ENCODE measurements at regions of chr7 and their contacts with region 1.

Region 1: DNA sequence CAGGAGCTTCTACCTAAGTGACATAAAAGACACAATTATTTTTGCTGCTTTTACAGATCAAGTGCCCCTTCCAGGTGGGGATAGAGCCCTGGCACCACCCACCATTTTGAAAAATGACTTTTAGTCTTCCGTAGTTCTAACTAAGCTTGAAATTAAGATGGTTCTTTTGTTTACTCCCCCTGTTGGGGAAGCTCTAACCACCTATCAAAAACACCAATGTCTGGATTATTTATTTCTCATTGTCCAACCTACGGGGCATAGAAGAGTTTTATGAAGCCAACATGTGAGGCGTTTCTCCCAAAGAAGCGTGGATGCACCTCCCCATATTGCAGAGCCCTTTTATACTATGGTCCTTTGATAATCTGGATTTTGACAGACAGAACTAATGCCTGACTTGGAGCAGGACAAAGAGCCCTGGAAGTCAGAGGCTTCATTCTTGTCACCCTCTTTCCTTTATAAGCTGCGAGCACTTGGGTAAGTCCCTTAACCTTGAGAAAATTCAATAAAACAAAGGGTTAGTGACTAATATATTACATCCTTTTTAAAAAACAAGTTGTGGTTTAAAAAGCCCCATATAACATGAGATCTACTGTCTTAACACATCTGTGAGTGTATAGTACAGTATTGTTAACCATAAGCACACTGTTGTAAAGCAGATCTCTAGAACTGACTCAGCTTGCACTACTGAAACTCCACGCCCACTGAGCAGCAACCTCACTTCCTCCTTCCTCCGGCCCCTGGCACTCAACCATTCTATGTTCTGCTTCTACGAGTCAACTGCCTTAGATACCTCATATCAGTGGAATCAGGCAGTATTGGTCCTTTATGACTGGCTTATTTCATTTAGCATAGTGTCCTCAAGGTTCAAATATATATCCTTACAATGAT is 67.5 kb downstream of the ATXN7L1 start:
- DNase-seq: peak; percentile 60 to 81 (median 62)
- H3K4me3 ChIP-seq: peak overlapping the region in 1 of 2 donors; percentile 30
- H3K4me3 Mint-ChIP-seq: peak overlapping the region; percentile 2 to 88 (median 55)
- H3K27ac ChIP-seq: peak overlapping the region; percentile 60
- H3K27ac Mint-ChIP-seq: peak overlapping the region; percentile 52 to 92 (median 80)
- H3K4me1 ChIP-seq: peaks cover 56% of the 10 kb centered on the region
- H3K4me1 Mint-ChIP-seq: peaks cover 45 to 65% (median 54%) of the 10 kb centered on the region in 4 donors
- H3K27me3 ChIP-seq: no peaks in the 10 kb centered on the region
- H3K27me3 Mint-ChIP-seq: no peaks in the 10 kb centered on the region

Region 2: DNA sequence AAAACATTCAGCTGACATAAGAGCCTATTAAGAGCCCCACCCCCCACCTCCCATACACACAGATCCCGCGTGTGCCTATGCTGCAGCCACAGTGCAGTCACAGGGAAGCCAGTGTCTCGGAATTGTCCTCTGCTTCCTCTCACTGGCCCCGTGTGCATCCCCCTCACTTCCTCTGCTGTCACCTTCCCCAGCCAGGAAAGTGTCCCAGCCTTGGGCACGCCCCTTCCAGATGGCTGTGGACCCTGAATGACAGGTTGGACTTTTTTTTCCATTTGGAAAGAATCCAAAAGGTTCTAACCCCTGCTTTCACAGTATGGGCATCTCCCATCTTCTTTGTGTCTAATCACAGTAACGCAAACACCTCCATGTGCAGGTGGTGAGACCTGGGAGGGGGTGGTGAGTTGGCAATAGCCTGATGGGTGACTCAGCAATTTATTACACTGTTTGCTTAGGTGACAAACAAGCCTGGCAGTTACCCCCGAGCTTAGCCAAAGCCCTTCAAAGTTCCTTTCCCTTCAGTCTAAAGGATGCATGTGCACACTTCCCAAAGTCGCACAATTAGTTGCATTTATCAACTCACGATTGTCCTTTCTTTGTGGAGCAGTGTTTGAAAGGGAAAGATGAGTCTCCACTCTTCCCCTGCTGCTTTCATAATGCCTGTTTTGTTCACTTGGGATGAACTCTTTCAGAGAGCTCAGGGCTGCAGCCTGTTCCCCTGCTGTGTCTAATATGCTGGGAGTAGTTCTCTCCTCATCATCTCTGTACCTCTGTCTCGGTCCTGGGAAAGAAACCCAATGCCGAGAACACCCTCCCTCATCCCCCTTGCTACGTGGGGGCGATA is 160.2 kb before region 1 on chr7:
- CTCF ChIA-PET with region 1: no interaction called
- POLR2A ChIA-PET with region 1: no interaction called
- intact Hi-C with region 1: no loop called
- DNase-seq: no peak
- H3K4me3 ChIP-seq: no peak overlapping the region
- H3K4me3 Mint-ChIP-seq: no peak overlapping the region
- H3K27ac ChIP-seq: no peak overlapping the region
- H3K27ac Mint-ChIP-seq: peak overlapping the region in 5 of 7 donors; percentile 6 to 70 (median 48)
- H3K4me1 ChIP-seq: no peaks in the 10 kb centered on the region
- H3K4me1 Mint-ChIP-seq: peaks cover 6 to 22% (median 11%) of the 10 kb centered on the region in 4 donors
- H3K27me3 ChIP-seq: no peaks in the 10 kb centered on the region
- H3K27me3 Mint-ChIP-seq: no peaks in the 10 kb centered on the region

Region 3: DNA sequence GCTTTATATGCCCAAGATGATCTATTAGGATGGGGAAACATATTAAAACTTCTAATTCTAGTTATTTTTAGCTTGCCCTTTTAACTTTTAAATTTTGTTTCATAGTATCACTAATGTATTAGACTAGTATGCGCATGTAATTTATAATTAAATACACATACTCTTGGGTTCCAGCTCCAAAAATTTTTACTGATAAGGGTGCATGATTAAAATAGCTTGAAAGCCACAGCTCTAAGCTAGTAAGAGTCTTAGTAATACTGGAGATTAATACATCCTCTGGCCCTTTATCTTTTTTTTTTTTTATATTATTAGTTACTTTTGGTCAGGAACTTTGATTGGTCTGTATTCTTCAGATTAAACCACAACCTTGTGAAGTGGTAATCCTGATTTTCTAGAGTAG is 13.9 kb after region 1 on chr7:
- CTCF ChIA-PET with region 1: interaction called, 6 read pairs
- POLR2A ChIA-PET with region 1: interaction called, 3 read pairs
- intact Hi-C with region 1: loop called (anchors 2 kb)
- DNase-seq: peak in 3 of 5 donors; percentile 8 to 22 (median 21)
- H3K4me3 ChIP-seq: no peak overlapping the region
- H3K4me3 Mint-ChIP-seq: peak overlapping the region in 3 of 8 donors; percentile 8 to 35 (median 17)
- H3K27ac ChIP-seq: no peak overlapping the region
- H3K27ac Mint-ChIP-seq: peak overlapping the region in 3 of 7 donors; percentile 14 to 73 (median 50)
- H3K4me1 ChIP-seq: peaks cover 19% of the 10 kb centered on the region
- H3K4me1 Mint-ChIP-seq: peaks cover 14 to 37% (median 25%) of the 10 kb centered on the region in 4 donors
- H3K27me3 ChIP-seq: no peaks in the 10 kb centered on the region
- H3K27me3 Mint-ChIP-seq: no peaks in the 10 kb centered on the region

Region 4: DNA sequence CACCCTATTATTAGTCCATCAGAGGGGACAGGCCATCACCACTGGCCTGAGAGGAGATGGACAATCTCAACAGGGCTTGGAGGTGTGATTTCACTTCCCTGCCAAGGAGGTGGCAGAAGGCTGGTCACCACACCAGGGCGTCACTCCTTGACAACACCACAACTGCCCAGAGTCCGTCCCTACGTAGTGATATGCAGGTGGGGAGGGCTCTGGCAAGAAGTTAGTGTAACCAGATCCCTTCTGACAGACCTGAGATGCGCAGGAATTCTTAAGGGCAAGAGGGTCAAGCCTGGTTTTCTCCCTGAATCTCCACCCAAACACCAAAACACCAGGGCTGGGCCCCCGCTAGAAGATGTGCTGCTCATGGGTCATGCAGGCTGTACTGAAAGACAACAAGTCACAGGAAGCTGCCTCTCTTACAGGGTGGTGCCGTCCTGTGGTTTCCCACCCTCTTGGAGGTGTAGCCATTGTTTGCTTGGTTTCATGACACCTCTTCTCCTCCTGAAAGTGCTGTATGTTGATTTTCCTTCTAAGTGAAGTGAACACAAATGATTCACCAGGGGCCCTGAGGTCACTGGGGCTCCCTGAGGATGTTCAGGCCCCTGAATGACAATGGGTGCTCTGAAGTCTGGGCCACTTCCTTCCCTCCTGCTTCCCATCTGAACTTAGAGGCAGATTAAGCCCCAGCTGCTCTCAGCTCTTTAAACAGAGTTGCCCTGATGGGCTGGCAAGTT is 40.3 kb after region 1 on chr7:
- CTCF ChIA-PET with region 1: interaction called, 5 read pairs
- POLR2A ChIA-PET with region 1: interaction called, 53 read pairs
- intact Hi-C with region 1: loop called (anchors 2 kb)
- DNase-seq: peak; percentile 63 to 81 (median 71)
- H3K4me3 ChIP-seq: peak overlapping the region; percentile 16 to 18
- H3K4me3 Mint-ChIP-seq: peak overlapping the region; percentile 60 to 87 (median 78)
- H3K27ac ChIP-seq: peak overlapping the region; percentile 35
- H3K27ac Mint-ChIP-seq: peak overlapping the region; percentile 74 to 96 (median 94)
- H3K4me1 ChIP-seq: peaks cover 58% of the 10 kb centered on the region
- H3K4me1 Mint-ChIP-seq: peaks cover 56 to 65% (median 58%) of the 10 kb centered on the region in 4 donors
- H3K27me3 ChIP-seq: no peaks in the 10 kb centered on the region
- H3K27me3 Mint-ChIP-seq: no peaks in the 10 kb centered on the region

Region 5: DNA sequence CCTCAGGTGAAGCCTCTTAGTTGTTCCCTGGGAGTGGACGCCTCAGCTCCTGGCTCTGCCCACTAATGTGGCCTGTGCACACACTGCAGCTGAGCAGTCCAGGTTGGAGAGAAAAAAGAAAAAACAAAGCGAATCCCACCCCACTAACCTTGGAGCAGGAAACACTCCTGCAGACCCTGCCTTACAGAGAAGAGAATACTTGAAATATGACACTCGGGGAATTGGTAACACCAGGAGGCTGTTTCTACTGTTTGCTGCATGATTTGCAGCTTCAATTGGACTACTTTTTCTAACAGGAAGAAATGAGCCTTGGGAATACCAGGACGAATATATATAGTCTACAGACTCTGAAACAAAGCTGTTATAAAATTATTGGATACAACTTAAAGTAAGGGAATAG is 176.3 kb after region 1 on chr7:
- CTCF ChIA-PET with region 1: no interaction called
- POLR2A ChIA-PET with region 1: no interaction called
- intact Hi-C with region 1: no loop called
- DNase-seq: no peak
- H3K4me3 ChIP-seq: no peak overlapping the region
- H3K4me3 Mint-ChIP-seq: no peak overlapping the region
- H3K27ac ChIP-seq: no peak overlapping the region
- H3K27ac Mint-ChIP-seq: peak overlapping the region in 1 of 7 donors; percentile 60
- H3K4me1 ChIP-seq: no peaks in the 10 kb centered on the region
- H3K4me1 Mint-ChIP-seq: no peaks in the 10 kb centered on the region
- H3K27me3 ChIP-seq: no peaks in the 10 kb centered on the region
- H3K27me3 Mint-ChIP-seq: peaks cover 0 to 11% of the 10 kb centered on the region in 2 donors

Measured in CD4-positive, alpha-beta memory T cell (primary cell).